ENCODE measurements at regions of chr18 and their contacts with region 1.

Region 1: DNA sequence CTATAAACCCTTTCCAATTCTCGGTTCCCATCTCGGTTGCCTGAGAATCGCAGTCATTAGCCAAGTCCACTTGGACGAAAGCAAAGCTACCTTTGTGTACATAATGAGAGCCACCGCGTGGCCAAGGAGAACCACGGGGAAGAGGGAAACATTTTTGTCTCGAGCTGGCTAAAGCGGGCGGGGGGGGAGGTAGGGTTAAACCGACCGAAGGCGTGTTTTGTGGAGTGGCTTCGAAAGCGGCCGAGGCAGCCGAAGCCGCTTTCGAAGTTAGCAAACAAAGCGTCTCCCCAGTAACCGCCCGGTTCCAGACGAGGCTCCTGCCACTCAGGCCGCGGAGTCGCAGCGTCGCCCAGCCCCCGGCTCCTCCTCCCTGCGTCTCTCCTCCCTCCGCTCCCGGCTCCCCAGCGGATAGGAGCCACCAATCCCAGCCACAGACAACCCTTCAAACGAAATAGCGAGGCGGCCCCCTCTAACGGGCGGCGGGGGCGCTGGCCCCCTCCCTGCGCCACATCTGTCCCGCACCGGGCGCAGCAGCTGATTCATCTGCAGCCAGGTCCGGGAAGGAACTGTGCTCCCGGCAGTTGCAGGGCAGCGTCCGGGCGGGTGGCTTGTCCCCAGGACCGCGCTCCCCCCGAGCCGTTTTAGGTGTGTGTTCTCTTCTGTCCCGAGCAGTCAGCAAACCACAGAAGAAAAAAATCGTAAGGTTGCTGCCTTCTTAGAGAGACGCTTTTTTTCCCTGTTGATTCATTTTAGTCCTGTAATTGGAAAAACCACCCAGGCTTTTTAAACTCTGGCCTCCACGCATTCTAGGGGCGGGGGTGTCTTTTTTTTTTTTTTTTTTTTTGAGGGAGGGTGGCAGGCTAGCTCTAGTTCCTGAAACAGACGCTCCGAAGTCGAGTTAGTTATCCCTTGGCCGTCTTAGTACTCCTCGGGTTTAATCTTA is 1.8 kb upstream of the TGIF1 start:
- DNase-seq: peak; percentile 96
- H3K4me3 Mint-ChIP-seq: peak overlapping the region; percentile 96
- H3K27ac Mint-ChIP-seq: peak overlapping the region; percentile 99
- H3K4me1 Mint-ChIP-seq: peaks cover 35% of the 10 kb centered on the region
- H3K27me3 Mint-ChIP-seq: no peaks in the 10 kb centered on the region

Region 2: DNA sequence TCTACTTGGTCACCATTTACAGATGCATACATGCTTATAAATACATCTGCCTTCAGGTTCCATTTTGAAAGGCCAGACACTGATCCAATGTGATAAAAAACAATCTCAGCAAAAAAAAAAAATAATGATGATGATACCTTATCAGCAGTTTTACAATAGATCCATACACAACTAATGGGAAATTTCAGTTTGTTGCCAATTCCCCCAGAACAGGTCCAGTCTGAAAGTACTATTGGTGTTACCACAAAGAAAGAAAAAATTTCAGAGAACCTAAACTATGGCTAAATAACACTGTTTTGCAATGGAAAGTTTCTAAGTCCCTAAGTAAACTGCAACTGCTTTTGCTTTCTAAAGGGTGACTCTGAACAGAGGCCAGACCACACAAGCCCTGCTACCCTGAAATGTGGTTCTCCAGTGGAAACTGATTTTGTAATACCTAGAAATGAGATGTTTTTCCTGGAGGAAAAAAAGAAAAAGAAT is 489.3 kb before region 1 on chr18:
- intact Hi-C with region 1: loop called (anchors 2 kb)
- DNase-seq: peak; percentile 87
- H3K4me3 Mint-ChIP-seq: peak overlapping the region; percentile 82
- H3K27ac Mint-ChIP-seq: peak overlapping the region; percentile 99
- H3K4me1 Mint-ChIP-seq: peaks cover 78% of the 10 kb centered on the region
- H3K27me3 Mint-ChIP-seq: no peaks in the 10 kb centered on the region

Region 3: GRCh38 chr18:3261371-3262246 is 186.6 kb before region 1 on chr18 and contains the start of gene MYL12B:
- intact Hi-C with region 1: loop called (anchors 1 kb)
- DNase-seq: peak; percentile 94
- H3K4me3 Mint-ChIP-seq: peak within 1 kb of the TSS; percentile 89
- H3K27ac Mint-ChIP-seq: peak within 1 kb of the TSS; percentile 98
- H3K4me1 Mint-ChIP-seq: peaks cover 68% of the 10 kb centered on the region
- H3K27me3 Mint-ChIP-seq: no peaks in the 10 kb centered on the region
- total RNA-seq, gene MYL12B: 239 and 245 TPM in 2 replicates

Region 4: GRCh38 chr18:3340015-3340681 is 108.0 kb before region 1 on chr18:
- intact Hi-C with region 1: loop called (anchors 1 kb)
- DNase-seq: no peak
- H3K4me3 Mint-ChIP-seq: no peak overlapping the region
- H3K27ac Mint-ChIP-seq: peak overlapping the region; percentile 40
- H3K4me1 Mint-ChIP-seq: peaks cover 14% of the 10 kb centered on the region
- H3K27me3 Mint-ChIP-seq: no peaks in the 10 kb centered on the region

Region 5: GRCh38 chr18:3623769-3624545 is 175.8 kb after region 1 on chr18:
- intact Hi-C with region 1: loop called (anchors 1 kb)
- DNase-seq: peak; percentile 66
- H3K4me3 Mint-ChIP-seq: peak overlapping the region; percentile 72
- H3K27ac Mint-ChIP-seq: peak overlapping the region; percentile 91
- H3K4me1 Mint-ChIP-seq: peaks cover 37% of the 10 kb centered on the region
- H3K27me3 Mint-ChIP-seq: no peaks in the 10 kb centered on the region